Dorsolateral prefrontal cortex (tissue), 120 donors: ENCODE measurements at regions of chr2 and their contacts with region 1.

Region 1: DNA sequence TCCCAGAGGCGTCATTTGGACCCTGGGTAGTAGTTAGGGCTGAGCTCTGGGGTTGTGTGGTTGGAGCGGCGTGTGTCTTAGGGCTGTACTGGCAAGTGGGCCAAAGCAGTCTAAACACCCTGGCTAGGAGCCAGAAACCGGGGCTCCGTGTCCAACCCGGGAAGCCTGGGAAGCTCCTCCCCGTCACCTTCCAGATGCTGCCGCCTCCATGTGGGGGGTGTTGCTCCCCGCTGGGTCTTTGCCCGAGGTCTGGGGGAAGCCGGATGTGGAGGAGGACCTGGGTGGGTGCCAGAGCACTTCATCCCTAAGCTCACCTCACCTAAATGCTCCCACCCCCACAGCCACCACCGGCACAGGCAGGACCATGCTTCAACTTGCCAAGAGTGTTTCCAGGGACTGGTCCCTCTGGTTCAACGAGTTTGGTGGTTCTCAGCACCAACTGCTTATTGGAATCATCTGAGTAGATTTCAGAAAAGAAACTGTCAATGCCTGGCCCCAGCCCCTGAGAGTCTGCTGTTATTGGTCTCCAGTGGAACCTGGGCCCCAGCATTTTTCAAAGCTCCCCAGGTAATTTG is 25.5 kb downstream of the TET3 start:
- DNase-seq: peak in 1 of 10 donors; percentile 37
- H3K4me3 ChIP-seq: peak overlapping the region in 6 of 59 donors; percentile 2 to 19 (median 10)
- H3K27ac ChIP-seq: peak overlapping the region in 11 of 59 donors; percentile 6 to 80 (median 29)
- H3K27me3 ChIP-seq: no peaks in the 10 kb centered on the region
- CTCF ChIP-seq: no peak

Region 2: DNA sequence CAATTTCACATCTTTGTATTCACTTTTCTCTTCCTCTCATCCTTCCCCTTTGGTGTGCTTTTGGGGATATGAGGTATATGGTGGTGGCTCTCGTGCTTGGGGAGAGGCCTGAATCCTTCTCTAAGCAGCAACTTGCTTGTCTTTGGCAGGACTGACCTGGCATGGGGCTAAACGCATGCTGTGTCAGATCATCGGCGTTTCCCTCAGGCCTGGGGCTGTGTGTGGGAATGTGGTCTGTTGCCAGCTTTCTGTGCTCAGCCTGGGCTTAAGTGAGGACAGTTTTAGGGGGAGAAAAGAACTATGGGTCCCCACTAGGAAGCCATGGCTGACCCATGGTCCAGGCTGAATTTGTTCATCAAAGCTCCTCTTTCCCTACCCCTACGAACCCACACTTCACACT is 35.3 kb after region 1 on chr2:
- intact Hi-C with region 1: loop called in 1 of 2 experiments (anchors 5 kb)
- DNase-seq: peak in 1 of 10 donors; percentile 44
- H3K4me3 ChIP-seq: no peak overlapping the region
- H3K27ac ChIP-seq: peak overlapping the region in 10 of 59 donors; percentile 4 to 41 (median 22)
- H3K27me3 ChIP-seq: no peaks in the 10 kb centered on the region
- CTCF ChIP-seq: no peak

Region 3: GRCh38 chr2:74079522-74080341 is 69.6 kb after region 1 on chr2:
- intact Hi-C with region 1: loop called in 1 of 2 experiments (anchors 5 kb)
- DNase-seq: no peak
- H3K4me3 ChIP-seq: peak overlapping the region in 1 of 59 donors; percentile 10
- H3K27ac ChIP-seq: peak overlapping the region in 23 of 59 donors; percentile 0 to 46 (median 20)
- H3K27me3 ChIP-seq: no peaks in the 10 kb centered on the region
- CTCF ChIP-seq: no peak